Ascending aorta (tissue), 2 donors: ENCODE measurements at regions of chr2 and their contacts with region 1.

Region 1: GRCh38 chr2:149597668-149598326 is 10.2 kb upstream of the MMADHC start:
- DNase-seq: peak in 1 of 2 donors; percentile 71
- H3K4me3 ChIP-seq: peak overlapping the region; percentile 23 to 55
- H3K27ac ChIP-seq: no peak overlapping the region
- H3K4me1 ChIP-seq: no peaks in the 10 kb centered on the region
- H3K27me3 ChIP-seq: no peaks in the 10 kb centered on the region
- CTCF ChIP-seq: peak; percentile 71 to 74 (median 74)

Region 2: GRCh38 chr2:149573760-149574159 is 24.0 kb before region 1 on chr2:
- intact Hi-C with region 1: no loop called
- DNase-seq: no peak
- H3K4me3 ChIP-seq: no peak overlapping the region
- H3K27ac ChIP-seq: no peak overlapping the region
- H3K4me1 ChIP-seq: peaks cover 3 to 9% of the 10 kb centered on the region in 2 donors
- H3K27me3 ChIP-seq: no peaks in the 10 kb centered on the region
- CTCF ChIP-seq: peak in 2 of 3 experiments; percentile 38 to 53

Region 3: GRCh38 chr2:150167711-150168110 is 569.9 kb after region 1 on chr2:
- intact Hi-C with region 1: loop called (anchors 10 kb)
- DNase-seq: no peak
- H3K4me3 ChIP-seq: no peak overlapping the region
- H3K27ac ChIP-seq: no peak overlapping the region
- H3K4me1 ChIP-seq: peaks cover 0 to 15% of the 10 kb centered on the region in 2 donors
- H3K27me3 ChIP-seq: no peaks in the 10 kb centered on the region
- CTCF ChIP-seq: no peak

Region 4: DNA sequence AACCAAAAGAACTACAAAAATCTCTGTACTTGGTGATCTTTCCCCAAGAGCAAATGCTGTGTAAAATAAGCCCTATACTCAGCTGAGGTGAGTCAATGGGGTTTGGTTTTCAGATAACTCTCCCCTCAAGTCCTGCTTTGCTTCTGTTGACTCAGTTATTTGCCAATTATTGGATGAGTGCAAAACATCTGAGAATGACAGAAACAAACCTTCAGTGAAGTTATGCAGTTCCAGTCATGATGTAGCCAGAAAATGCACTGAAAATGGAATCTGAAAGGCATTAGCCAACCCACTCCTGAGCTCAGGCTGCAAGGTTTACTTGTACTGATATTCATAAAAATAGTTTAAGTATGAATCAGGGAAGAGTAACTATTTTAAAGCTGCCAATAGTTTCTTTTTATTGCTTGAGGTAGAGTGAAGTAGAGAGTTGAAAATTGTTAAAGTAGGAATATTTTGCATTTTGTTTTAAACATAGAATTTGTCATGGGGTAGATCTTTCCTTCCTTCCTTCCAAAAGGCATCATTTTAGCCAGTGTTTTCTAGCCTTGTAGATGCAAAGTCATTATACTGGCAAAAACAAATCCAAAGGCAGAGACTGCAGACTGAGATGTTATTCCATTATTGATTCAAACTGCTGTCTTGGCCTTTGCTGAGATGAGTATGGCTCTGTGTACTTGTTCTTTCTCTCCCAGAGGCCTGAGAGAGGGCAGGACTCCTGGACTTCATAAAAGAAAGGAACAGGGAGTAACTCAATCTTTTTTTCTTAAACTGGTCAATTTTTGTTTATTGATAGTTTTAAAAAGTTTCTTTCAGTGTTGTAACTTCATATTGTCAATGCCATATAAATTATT is 674.4 kb after region 1 on chr2:
- intact Hi-C with region 1: loop called (anchors 10 kb)
- DNase-seq: no peak
- H3K4me3 ChIP-seq: no peak overlapping the region
- H3K27ac ChIP-seq: peak overlapping the region in 1 of 2 donors; percentile 26
- H3K4me1 ChIP-seq: no peaks in the 10 kb centered on the region
- H3K27me3 ChIP-seq: no peaks in the 10 kb centered on the region
- CTCF ChIP-seq: no peak

Region 5: GRCh38 chr2:150610671-150611279 is 1013.0 kb after region 1 on chr2:
- intact Hi-C with region 1: loop called (anchors 5 kb)
- DNase-seq: no peak
- H3K4me3 ChIP-seq: no peak overlapping the region
- H3K27ac ChIP-seq: no peak overlapping the region
- H3K4me1 ChIP-seq: no peaks in the 10 kb centered on the region
- H3K27me3 ChIP-seq: no peaks in the 10 kb centered on the region
- CTCF ChIP-seq: peak in 2 of 3 experiments; percentile 27 to 34

Region 6: GRCh38 chr2:151051574-151052220 is 1453.9 kb after region 1 on chr2:
- intact Hi-C with region 1: loop called (anchors 5 kb)
- DNase-seq: no peak
- H3K4me3 ChIP-seq: no peak overlapping the region
- H3K27ac ChIP-seq: no peak overlapping the region
- H3K4me1 ChIP-seq: no peaks in the 10 kb centered on the region
- H3K27me3 ChIP-seq: no peaks in the 10 kb centered on the region
- CTCF ChIP-seq: peak; percentile 17 to 79 (median 58)

Region 7: DNA sequence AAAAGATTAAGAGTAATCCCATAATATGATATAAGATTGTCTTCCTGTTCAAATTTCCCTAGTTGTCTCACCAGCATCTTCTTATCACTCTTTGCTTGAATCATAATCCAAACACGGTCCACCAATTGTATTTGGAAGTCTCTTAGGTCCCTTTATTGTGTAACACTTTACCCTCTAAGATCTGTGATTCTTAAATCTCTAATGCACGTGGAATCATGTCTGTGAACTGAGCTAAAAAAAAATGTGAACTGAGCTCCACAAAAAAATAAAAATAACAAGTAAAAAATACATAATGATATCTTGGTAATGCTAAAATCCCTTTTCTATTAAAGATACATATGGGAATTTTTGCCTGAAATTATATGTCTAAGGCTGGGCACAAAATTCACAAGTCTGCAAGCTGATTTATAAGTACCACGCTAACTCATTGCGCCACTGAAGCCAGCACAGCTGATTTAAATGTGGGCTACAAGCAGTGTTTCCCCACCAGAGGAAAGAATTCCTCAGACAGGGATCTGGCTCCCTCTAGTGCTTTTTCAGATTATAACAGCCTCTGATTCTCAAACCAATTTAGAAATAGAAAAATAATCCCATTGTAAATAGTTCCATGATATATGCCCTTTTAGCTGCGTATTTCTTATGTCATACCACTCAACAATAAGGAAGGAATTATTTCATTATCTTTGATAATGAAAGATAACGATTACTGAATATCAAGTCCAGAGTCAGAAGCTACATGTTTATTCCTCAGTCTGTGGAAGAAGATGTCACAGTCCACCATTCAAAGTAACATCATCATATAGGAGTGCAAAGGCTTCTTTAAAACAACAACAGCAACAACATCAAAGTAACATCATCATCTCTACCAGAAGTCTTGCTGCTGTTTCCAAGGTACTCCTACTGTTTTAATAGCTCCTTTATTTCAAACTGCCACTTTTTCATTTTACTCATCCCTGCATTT is 1641.0 kb after region 1 on chr2:
- intact Hi-C with region 1: loop called (anchors 1 kb)
- DNase-seq: peak in 1 of 2 donors; percentile 79
- H3K4me3 ChIP-seq: no peak overlapping the region
- H3K27ac ChIP-seq: no peak overlapping the region
- H3K4me1 ChIP-seq: no peaks in the 10 kb centered on the region
- H3K27me3 ChIP-seq: no peaks in the 10 kb centered on the region
- CTCF ChIP-seq: peak; percentile 77 to 91 (median 79)